ENCODE measurements at regions of chrX and their contacts with region 1.

Region 1: GRCh38 chrX:153667956-153668396 is 5.6 kb downstream of the PNCK start:
- DNase-seq: no peak
- H3K4me3 ChIP-seq: no peak overlapping the region
- H3K27ac ChIP-seq: no peak overlapping the region
- H3K4me1 ChIP-seq: peaks cover 2% of the 10 kb centered on the region
- H3K27me3 ChIP-seq: no peaks in the 10 kb centered on the region
- CTCF ChIP-seq: peak; percentile 29 to 59 (median 51)
- POLR2A ChIP-seq: no peak

Region 2: GRCh38 chrX:152941328-152942106 is 726.5 kb before region 1 on chrX:
- intact Hi-C with region 1: loop called (anchors 10 kb)
- DNase-seq: no peak
- H3K4me3 ChIP-seq: peak overlapping the region; percentile 49 to 50
- H3K27ac ChIP-seq: peak overlapping the region; percentile 87
- H3K4me1 ChIP-seq: no peaks in the 10 kb centered on the region
- H3K27me3 ChIP-seq: no peaks in the 10 kb centered on the region
- CTCF ChIP-seq: peak; percentile 55 to 83 (median 80)
- POLR2A ChIP-seq: no peak

Region 3: GRCh38 chrX:153554519-153555167 is 113.3 kb before region 1 on chrX:
- intact Hi-C with region 1: loop called (anchors 10 kb)
- DNase-seq: no peak
- H3K4me3 ChIP-seq: no peak overlapping the region
- H3K27ac ChIP-seq: no peak overlapping the region
- H3K4me1 ChIP-seq: no peaks in the 10 kb centered on the region
- H3K27me3 ChIP-seq: no peaks in the 10 kb centered on the region
- CTCF ChIP-seq: peak in 2 of 3 experiments; percentile 9 to 37
- POLR2A ChIP-seq: no peak

Region 4: GRCh38 chrX:153722704-153723353 is 54.9 kb after region 1 on chrX:
- intact Hi-C with region 1: no loop called
- DNase-seq: no peak
- H3K4me3 ChIP-seq: peak overlapping the region; percentile 59 to 63
- H3K27ac ChIP-seq: peak overlapping the region; percentile 74
- H3K4me1 ChIP-seq: peaks cover 48% of the 10 kb centered on the region
- H3K27me3 ChIP-seq: no peaks in the 10 kb centered on the region
- CTCF ChIP-seq: no peak
- POLR2A ChIP-seq: no peak

Region 5: DNA sequence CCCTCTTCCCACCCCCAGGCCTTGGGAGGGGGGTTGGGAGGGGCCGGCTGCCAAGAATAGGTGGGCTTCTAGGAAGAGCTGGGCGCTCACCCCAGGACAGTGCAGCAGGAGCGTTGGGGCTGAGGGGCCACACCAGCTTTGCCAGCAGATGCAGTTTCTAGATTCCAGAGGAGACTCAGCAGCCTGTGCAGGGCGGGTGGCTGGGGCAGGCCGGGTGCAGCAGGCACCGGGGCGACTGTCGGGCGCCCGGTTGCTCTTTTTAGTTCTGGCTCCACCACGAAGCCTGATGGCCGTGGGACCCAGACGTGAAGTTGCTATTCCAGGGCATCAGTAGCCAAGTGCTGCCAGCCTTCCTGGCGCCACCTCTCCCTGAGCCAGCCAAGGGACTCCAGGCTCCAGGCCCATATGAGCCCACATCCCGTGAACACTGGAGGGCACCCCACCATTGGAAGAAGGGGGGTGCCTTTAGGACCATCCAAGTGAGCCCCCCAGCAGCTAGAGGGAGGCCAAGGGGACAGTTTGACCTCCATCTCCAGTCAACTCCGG is 132.3 kb after region 1 on chrX:
- intact Hi-C with region 1: no loop called
- DNase-seq: no peak
- H3K4me3 ChIP-seq: no peak overlapping the region
- H3K27ac ChIP-seq: no peak overlapping the region
- H3K4me1 ChIP-seq: peaks cover 10% of the 10 kb centered on the region
- H3K27me3 ChIP-seq: no peaks in the 10 kb centered on the region
- CTCF ChIP-seq: no peak
- POLR2A ChIP-seq: no peak

Measured in vagina (tissue), 2 donors.